Naive thymus-derived CD4-positive, alpha-beta T cell (primary cell): ENCODE measurements at regions of chr3 and their contacts with region 1.

Region 1: GRCh38 chr3:100400780-100401673 is at the starts of genes LNP1 and TOMM70:
- DNase-seq: peak; percentile 83 to 95 (median 94)
- ATAC-seq: peak; percentile 93
- H3K4me3 ChIP-seq: peak within 1 kb of the TSS; percentile 90
- H3K4me3 Mint-ChIP-seq: peak within 1 kb of the TSS; percentile 87 to 99 (median 96)
- H3K27ac ChIP-seq: peak within 1 kb of the TSS; percentile 85
- H3K27ac Mint-ChIP-seq: peak within 1 kb of the TSS; percentile 90 to 98 (median 95)
- H3K4me1 ChIP-seq: peaks cover 21 to 34% of the 10 kb centered on the region in 2 donors
- H3K4me1 Mint-ChIP-seq: peaks cover 36 to 90% (median 77%) of the 10 kb centered on the region in 7 donors
- H3K27me3 ChIP-seq: no peaks in the 10 kb centered on the region
- H3K27me3 Mint-ChIP-seq: no peaks in the 10 kb centered on the region
- total RNA-seq, gene LNP1: 0.82 to 2.4 (median 1.6) TPM
- total RNA-seq, gene TOMM70: 18.3 to 43.7 (median 35.5) TPM

Region 2: DNA sequence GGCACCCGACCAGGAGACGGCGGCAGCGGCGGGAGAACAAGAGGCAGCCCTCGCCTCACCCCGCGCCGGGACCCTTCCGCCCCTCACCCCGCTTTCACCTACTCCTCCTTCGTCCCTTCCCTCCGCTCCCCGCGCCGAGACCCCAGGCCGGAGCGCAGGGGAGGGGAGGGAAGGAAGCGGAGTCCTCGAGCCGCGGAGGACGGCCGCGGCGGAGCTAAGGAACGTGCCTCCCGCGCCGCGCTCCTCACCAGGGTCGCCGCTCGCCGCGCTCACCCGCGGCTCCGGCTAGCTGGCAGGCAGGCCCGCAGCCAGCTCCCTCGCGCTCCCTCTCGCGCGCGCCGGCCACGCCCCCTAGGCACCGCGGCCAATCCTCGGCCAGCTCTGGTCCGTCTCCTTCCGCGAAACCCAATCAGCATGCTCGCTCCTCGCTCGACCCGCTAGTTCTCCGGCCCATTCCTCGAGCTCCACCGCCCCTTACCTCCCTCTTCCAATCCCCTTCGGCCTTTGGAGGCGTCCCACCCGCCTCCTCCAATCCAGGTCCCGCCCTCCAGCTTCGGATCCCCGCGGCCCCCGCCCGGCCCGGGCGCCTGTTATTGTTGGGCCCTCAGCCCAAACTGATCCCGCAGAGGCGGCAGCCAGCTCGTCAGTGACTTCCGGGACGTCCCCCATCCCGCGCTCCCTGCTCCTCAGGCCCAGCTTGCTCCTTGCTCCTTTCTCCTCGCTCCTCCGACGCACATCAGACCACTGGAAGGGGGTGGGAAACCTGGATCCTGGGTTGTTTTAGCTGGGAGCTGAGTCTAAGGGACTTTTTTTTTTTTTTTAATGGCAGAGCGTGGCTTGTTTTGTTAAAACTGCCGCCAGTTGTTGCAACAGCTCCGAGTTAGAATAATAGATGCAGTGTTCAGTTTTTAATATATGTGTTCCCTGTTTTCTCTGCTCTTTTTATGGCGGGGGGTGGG is 1499.4 kb before region 1 on chr3 and contains the start of gene DCBLD2:
- CTCF ChIA-PET with region 1: no interaction called
- POLR2A ChIA-PET with region 1: interaction called, 3 read pairs
- intact Hi-C with region 1: loop called (anchors 2 to 10 kb)
- DNase-seq: peak; percentile 90 to 96 (median 94)
- ATAC-seq: peak; percentile 99
- H3K4me3 ChIP-seq: peak within 1 kb of the TSS; percentile 86
- H3K4me3 Mint-ChIP-seq: peak within 1 kb of the TSS; percentile 89 to 97 (median 94)
- H3K27ac ChIP-seq: peak within 1 kb of the TSS; percentile 78
- H3K27ac Mint-ChIP-seq: peak within 1 kb of the TSS; percentile 44 to 96 (median 86)
- H3K4me1 ChIP-seq: peaks cover 5% of the 10 kb centered on the region in 2 donors
- H3K4me1 Mint-ChIP-seq: peaks cover 14 to 27% (median 22%) of the 10 kb centered on the region in 7 donors
- H3K27me3 ChIP-seq: no peaks in the 10 kb centered on the region
- H3K27me3 Mint-ChIP-seq: peaks cover 0 to 30% (median 8%) of the 10 kb centered on the region in 5 donors
- total RNA-seq, gene DCBLD2: 1.9 to 4.7 (median 2.9) TPM

Region 3: DNA sequence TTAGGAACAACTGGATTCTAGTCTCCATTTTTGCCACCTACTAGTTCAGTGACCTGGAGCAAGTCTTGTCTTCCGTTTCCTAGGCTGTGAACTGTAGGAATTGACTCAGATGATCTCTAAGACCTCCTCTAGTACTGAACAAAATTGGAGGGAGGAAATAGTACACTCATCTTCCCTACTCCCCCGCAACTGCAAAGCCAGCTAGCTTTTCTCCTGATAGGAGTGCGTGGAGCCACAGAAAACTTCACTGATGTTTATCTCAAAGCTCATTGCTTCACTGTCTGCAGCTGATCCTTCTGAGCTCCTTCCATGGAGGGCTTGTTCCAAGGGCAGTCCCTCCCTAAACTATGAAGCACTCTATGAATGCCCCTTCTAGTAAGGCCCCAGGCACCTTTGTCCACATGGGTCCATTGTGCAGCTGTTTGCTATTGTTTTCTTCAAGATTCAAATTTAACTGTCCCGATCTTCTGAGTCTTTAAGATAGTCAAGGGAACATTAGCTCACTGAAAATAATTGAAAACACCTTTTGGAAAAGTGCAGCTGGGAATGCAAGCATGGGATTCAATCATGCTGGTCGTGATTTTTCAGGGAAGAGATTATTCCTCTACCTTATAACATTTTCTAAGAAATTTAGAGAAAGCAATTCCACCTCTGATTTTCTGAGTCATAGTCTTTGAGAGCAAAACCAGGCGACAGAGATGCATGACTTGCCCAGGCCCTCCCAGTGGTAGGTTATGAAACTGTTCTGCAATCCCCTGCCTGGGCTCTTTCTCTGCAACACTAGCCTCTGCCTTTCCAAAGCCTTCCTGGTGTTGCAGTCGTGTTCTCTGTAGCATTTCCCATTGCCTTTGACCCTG is 311.0 kb before region 1 on chr3:
- CTCF ChIA-PET with region 1: no interaction called
- POLR2A ChIA-PET with region 1: no interaction called
- intact Hi-C with region 1: no loop called
- DNase-seq: no peak
- ATAC-seq: peak; percentile 63
- H3K4me3 ChIP-seq: no peak overlapping the region
- H3K4me3 Mint-ChIP-seq: peak overlapping the region in 1 of 10 donors; percentile 36
- H3K27ac ChIP-seq: no peak overlapping the region
- H3K27ac Mint-ChIP-seq: peak overlapping the region in 1 of 9 donors; percentile 34
- H3K4me1 ChIP-seq: no peaks in the 10 kb centered on the region
- H3K4me1 Mint-ChIP-seq: peaks cover 0 to 36% (median 0%) of the 10 kb centered on the region in 7 donors
- H3K27me3 ChIP-seq: no peaks in the 10 kb centered on the region
- H3K27me3 Mint-ChIP-seq: peaks cover 0 to 3% (median 0%) of the 10 kb centered on the region in 5 donors

Region 4: DNA sequence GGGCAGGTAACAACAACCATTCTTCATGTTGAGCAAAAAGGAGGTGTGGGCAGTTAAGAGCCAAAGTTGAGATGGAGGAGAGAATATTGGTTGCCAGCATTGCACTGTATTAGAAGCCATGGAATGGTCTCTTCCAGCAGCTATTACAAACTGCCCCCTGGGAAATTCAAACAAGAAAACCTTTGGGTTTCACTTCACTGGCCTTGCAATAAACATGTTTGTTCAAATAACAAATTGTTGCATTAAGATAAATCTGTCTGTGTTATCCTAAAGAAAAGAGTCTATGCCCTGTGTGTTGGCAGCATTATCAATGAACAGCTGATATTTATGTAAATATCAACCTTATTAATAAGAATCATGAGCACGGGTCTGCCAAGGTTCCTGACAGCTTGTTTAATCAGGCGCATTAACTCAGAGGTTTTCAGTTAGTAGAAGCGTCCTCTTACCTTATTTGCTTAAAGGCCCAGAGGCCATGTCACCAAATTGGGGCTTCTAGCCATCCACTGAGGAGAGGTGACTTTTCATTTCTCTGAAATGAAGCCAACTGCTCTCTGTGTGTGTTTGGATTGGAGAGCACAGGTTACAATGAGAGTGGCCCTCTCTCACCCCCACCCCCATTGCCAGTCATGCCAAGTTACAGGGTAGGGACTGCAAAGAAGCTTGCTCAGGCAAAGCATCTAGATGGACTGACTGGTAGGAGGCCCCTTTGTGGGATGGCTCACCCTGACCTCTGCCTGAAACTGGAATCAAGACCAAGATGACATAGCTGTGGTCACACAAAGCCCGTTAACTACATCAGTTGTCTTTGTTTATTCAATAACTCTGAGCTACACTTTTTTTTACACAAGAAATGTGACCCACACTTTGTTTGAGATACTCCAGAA is 297.2 kb before region 1 on chr3:
- CTCF ChIA-PET with region 1: no interaction called
- POLR2A ChIA-PET with region 1: no interaction called
- intact Hi-C with region 1: no loop called
- DNase-seq: no peak
- ATAC-seq: no peak
- H3K4me3 ChIP-seq: no peak overlapping the region
- H3K4me3 Mint-ChIP-seq: no peak overlapping the region
- H3K27ac ChIP-seq: no peak overlapping the region
- H3K27ac Mint-ChIP-seq: peak overlapping the region in 1 of 9 donors; percentile 21
- H3K4me1 ChIP-seq: no peaks in the 10 kb centered on the region
- H3K4me1 Mint-ChIP-seq: peaks cover 0 to 38% (median 0%) of the 10 kb centered on the region in 7 donors
- H3K27me3 ChIP-seq: no peaks in the 10 kb centered on the region
- H3K27me3 Mint-ChIP-seq: no peaks in the 10 kb centered on the region

Region 5: GRCh38 chr3:100210772-100211135 is 190.3 kb before region 1 on chr3:
- CTCF ChIA-PET with region 1: no interaction called
- POLR2A ChIA-PET with region 1: no interaction called
- intact Hi-C with region 1: loop called in 1 of 2 experiments (anchors 1 kb)
- DNase-seq: peak in 4 of 9 donors; percentile 1 to 25 (median 11)
- ATAC-seq: peak; percentile 54
- H3K4me3 ChIP-seq: no peak overlapping the region
- H3K4me3 Mint-ChIP-seq: peak overlapping the region in 6 of 10 donors; percentile 45 to 75 (median 64)
- H3K27ac ChIP-seq: no peak overlapping the region
- H3K27ac Mint-ChIP-seq: peak overlapping the region in 6 of 9 donors; percentile 41 to 92 (median 86)
- H3K4me1 ChIP-seq: peaks cover 10 to 12% of the 10 kb centered on the region in 2 donors
- H3K4me1 Mint-ChIP-seq: peaks cover 10 to 32% (median 16%) of the 10 kb centered on the region in 7 donors
- H3K27me3 ChIP-seq: no peaks in the 10 kb centered on the region
- H3K27me3 Mint-ChIP-seq: peaks cover 0 to 5% (median 0%) of the 10 kb centered on the region in 5 donors

Region 6: DNA sequence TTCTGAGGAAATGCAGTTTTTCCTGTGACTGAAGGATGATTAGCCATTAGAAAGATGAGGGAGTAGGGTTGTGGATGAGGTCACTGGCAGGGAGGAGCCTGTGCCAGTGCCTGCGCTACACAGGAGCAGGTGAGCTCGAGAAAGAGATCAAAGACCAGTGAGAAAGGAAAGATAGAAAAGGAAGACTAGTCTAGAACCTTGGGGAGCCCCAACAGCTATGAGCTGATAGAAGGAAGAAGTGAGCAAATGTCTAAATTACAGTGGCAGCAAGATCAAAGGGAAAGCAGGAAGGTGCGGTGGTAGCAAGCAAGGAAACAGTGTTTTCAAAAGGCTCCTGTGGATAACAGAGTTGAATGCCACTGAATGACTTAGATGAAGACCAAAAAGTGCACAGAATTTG is 39.9 kb after region 1 on chr3:
- CTCF ChIA-PET with region 1: no interaction called
- POLR2A ChIA-PET with region 1: interaction called, 5 read pairs
- intact Hi-C with region 1: loop called in 1 of 2 experiments (anchors 1 kb)
- DNase-seq: peak in 7 of 9 donors; percentile 13 to 50 (median 41)
- ATAC-seq: peak; percentile 51
- H3K4me3 ChIP-seq: no peak overlapping the region
- H3K4me3 Mint-ChIP-seq: peak overlapping the region in 8 of 10 donors; percentile 3 to 72 (median 22)
- H3K27ac ChIP-seq: no peak overlapping the region
- H3K27ac Mint-ChIP-seq: peak overlapping the region in 6 of 9 donors; percentile 5 to 64 (median 43)
- H3K4me1 ChIP-seq: peaks cover 4 to 5% of the 10 kb centered on the region in 2 donors
- H3K4me1 Mint-ChIP-seq: peaks cover 6 to 16% (median 10%) of the 10 kb centered on the region in 7 donors
- H3K27me3 ChIP-seq: no peaks in the 10 kb centered on the region
- H3K27me3 Mint-ChIP-seq: no peaks in the 10 kb centered on the region

Region 7: GRCh38 chr3:101319531-101319930 is 918.5 kb after region 1 on chr3:
- CTCF ChIA-PET with region 1: no interaction called
- POLR2A ChIA-PET with region 1: no interaction called
- intact Hi-C with region 1: no loop called
- DNase-seq: no peak
- ATAC-seq: no peak
- H3K4me3 ChIP-seq: no peak overlapping the region
- H3K4me3 Mint-ChIP-seq: no peak overlapping the region
- H3K27ac ChIP-seq: no peak overlapping the region
- H3K27ac Mint-ChIP-seq: peak overlapping the region in 1 of 9 donors; percentile 56
- H3K4me1 ChIP-seq: no peaks in the 10 kb centered on the region
- H3K4me1 Mint-ChIP-seq: no peaks in the 10 kb centered on the region
- H3K27me3 ChIP-seq: no peaks in the 10 kb centered on the region
- H3K27me3 Mint-ChIP-seq: no peaks in the 10 kb centered on the region

Region 8: GRCh38 chr3:101391413-101391950 is 990.5 kb after region 1 on chr3:
- CTCF ChIA-PET with region 1: no interaction called
- POLR2A ChIA-PET with region 1: interaction called, 5 read pairs
- intact Hi-C with region 1: loop called in 1 of 2 experiments (anchors 5 kb)
- DNase-seq: no peak
- ATAC-seq: no peak
- H3K4me3 ChIP-seq: no peak overlapping the region
- H3K4me3 Mint-ChIP-seq: peak overlapping the region in 1 of 10 donors; percentile 12
- H3K27ac ChIP-seq: no peak overlapping the region
- H3K27ac Mint-ChIP-seq: peak overlapping the region in 7 of 9 donors; percentile 5 to 71 (median 43)
- H3K4me1 ChIP-seq: peaks cover 0 to 12% of the 10 kb centered on the region in 2 donors
- H3K4me1 Mint-ChIP-seq: peaks cover 20 to 58% (median 49%) of the 10 kb centered on the region in 7 donors
- H3K27me3 ChIP-seq: no peaks in the 10 kb centered on the region
- H3K27me3 Mint-ChIP-seq: no peaks in the 10 kb centered on the region

Region 9: GRCh38 chr3:101724329-101725193 is 1323.5 kb after region 1 on chr3 and contains the start of gene CEP97:
- CTCF ChIA-PET with region 1: no interaction called
- POLR2A ChIA-PET with region 1: no interaction called
- intact Hi-C with region 1: loop called (anchors 1 to 2 kb)
- DNase-seq: peak; percentile 70 to 90 (median 88)
- ATAC-seq: peak; percentile 98
- H3K4me3 ChIP-seq: peak within 1 kb of the TSS; percentile 91
- H3K4me3 Mint-ChIP-seq: peak within 1 kb of the TSS; percentile 88 to 100 (median 98)
- H3K27ac ChIP-seq: peak within 1 kb of the TSS; percentile 82
- H3K27ac Mint-ChIP-seq: peak within 1 kb of the TSS; percentile 91 to 98 (median 97)
- H3K4me1 ChIP-seq: peaks cover 25 to 30% of the 10 kb centered on the region in 2 donors
- H3K4me1 Mint-ChIP-seq: peaks cover 26 to 57% (median 44%) of the 10 kb centered on the region in 7 donors
- H3K27me3 ChIP-seq: no peaks in the 10 kb centered on the region
- H3K27me3 Mint-ChIP-seq: no peaks in the 10 kb centered on the region
- total RNA-seq, gene CEP97: 5.5 to 21.7 (median 10.9) TPM